OCI-LY7 (cell line): ENCODE measurements at regions of chr22 and their contacts with region 1.

Region 1: DNA sequence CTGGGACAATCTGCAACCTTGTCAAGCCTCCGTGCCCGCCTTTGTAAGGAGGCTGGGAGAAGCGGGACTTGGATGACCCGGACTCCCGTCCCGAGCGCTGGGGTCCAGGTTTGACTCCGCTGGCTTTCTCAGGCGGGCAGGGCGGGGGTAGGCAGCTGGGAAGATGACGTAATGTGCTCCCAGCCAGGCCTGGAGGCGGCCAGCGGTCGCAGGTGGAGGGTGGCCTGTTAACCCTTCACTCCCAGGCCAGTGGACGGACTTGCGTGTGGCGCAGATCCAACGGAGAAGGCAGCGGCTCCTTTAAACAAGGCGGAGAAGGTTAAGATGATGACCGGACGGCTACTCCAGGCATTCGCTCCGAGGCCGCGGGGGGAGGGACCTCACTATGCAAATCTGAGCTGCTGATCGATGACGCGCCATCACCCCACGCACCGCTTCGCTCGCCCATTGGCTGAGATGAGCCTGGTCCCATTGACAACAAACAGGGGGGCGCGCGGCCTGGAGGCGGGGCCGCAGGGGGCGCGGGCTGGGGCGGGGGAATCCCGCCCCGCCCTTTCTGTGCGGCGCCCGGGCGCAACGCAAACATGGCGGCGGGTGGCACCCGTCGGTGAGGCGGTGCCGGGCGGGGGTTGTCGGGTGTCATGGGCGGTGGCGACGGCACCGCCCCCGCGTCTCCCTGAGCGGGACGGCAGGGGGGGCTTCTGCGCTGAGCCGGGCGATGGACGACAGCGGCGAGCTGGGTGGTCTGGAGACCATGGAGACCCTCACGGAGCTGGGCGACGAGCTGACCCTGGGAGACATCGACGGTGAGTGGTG is at the start of gene SREBF2:
- DNase-seq: peak; percentile 100
- H3K4me3 ChIP-seq: peak within 1 kb of the TSS; percentile 90
- H3K27ac ChIP-seq: peak within 1 kb of the TSS; percentile 84
- H3K4me1 ChIP-seq: peaks cover 57% of the 10 kb centered on the region
- CTCF ChIP-seq: no peak
- total RNA-seq, gene SREBF2: 132 and 167 TPM in 2 replicates

Region 2: DNA sequence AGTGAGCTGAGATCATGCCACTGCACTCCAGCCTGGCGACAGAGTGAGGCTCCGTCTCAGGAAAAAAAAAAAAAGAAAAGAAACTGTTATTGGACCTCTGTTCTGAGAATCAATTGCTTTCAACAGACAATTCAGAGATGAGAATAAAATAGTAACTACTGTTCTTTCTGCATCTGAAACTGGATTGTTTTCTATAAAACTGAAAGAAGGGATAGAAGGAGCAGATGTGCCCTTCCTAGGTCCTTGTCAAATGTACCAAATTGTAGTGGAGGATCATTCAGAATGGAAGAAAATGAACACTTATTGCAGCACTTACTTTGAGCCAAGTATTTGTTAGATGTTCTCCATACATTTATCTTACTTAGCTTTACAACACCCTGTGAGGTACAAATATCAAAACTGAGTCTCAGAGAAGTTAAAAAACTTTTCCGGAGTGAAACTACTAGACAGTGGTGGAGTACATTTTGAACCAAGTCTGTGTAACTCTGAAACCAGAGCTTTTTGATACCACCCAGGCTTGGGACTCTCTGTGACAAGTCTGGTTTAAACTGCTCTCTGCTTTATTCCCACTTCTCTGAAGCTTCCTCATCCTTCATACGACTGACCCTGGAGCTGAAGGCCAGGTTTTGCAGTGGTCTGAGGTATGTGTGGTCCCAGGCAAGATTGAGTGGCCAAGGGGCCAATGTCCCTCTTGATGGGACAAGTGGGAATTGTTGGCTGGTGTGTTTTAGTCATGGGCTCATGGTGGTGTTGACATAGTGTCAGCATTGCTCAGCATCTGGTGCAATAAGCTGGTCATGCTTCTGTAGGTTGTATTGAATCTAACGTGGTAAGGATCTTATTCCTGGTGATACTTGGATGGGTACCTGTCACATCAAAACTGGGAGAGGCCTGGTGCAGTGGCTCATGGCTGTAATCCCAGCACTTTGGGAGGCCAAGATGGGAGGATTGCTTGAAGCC is 80.5 kb before region 1 on chr22:
- CTCF ChIA-PET with region 1: no interaction called
- POLR2A ChIA-PET with region 1: no interaction called
- intact Hi-C with region 1: no loop called
- DNase-seq: peak; percentile 40
- H3K4me3 ChIP-seq: no peak overlapping the region
- H3K27ac ChIP-seq: peak overlapping the region; percentile 8
- H3K4me1 ChIP-seq: peaks cover 29% of the 10 kb centered on the region
- CTCF ChIP-seq: no peak

Region 3: DNA sequence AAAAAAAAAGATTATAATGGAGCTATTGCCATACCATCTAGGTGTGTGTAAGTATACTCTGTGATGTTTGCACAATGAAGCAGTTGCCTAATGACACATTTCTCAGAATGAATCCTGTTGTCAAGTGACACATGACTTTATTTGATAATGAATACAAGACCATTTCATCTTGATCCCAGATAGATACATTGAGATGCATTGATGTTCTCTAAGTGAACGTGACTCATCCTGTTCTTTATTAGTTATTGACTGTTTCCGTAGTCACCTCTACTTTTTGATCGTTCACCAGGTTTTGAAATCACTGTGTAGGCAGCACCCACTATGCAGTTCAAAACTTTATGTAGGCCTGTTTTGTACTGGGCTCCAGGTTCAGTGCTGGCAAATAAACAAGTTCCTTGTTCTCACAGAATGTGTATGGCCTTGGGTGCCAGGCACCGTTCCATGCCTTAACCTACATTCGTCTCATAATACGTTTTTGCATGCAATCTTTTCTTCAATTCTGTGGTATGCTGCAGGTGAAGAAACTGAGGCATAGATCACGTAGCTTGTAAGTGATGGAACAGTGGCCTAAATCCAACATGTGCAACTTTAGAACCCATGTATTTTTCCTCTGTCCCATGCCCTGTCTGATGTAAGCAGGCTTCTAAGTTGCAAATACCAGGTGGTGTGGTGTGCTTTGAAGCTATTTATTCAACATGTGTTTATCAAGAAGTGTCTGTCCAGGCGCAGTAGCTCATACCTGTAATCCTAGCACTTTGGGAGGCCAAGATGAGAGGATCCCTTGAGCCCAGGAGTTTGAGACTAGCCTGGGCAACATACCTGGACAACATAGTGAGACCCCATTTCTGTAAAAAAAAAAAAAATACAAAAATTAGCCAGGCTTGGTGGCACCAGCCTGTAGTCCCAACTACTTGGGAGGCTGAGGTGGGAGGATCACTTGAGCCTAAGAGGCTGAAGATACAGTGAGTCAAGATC is 10.5 kb after region 1 on chr22:
- CTCF ChIA-PET with region 1: no interaction called
- POLR2A ChIA-PET with region 1: interaction called, 16 read pairs
- intact Hi-C with region 1: no loop called
- DNase-seq: peak; percentile 63
- H3K4me3 ChIP-seq: peak overlapping the region; percentile 25
- H3K27ac ChIP-seq: peak overlapping the region; percentile 57
- H3K4me1 ChIP-seq: peaks cover 93% of the 10 kb centered on the region
- CTCF ChIP-seq: no peak

Region 4: GRCh38 chr22:41857155-41857859 is 24.5 kb after region 1 on chr22:
- CTCF ChIA-PET with region 1: interaction called, 3 read pairs
- POLR2A ChIA-PET with region 1: interaction called, 5 read pairs
- intact Hi-C with region 1: loop called (anchors 1 kb)
- DNase-seq: peak; percentile 81
- H3K4me3 ChIP-seq: no peak overlapping the region
- H3K27ac ChIP-seq: peak overlapping the region; percentile 98
- H3K4me1 ChIP-seq: peaks cover 82% of the 10 kb centered on the region
- CTCF ChIP-seq: peak; percentile 94

Region 5: GRCh38 chr22:41919357-41920224 is 86.8 kb after region 1 on chr22:
- CTCF ChIA-PET with region 1: no interaction called
- POLR2A ChIA-PET with region 1: no interaction called
- intact Hi-C with region 1: loop called (anchors 5 kb)
- DNase-seq: peak; percentile 84
- H3K4me3 ChIP-seq: peak overlapping the region; percentile 59
- H3K27ac ChIP-seq: peak overlapping the region; percentile 88
- H3K4me1 ChIP-seq: peaks cover 81% of the 10 kb centered on the region
- CTCF ChIP-seq: 0 out of 2 replicates have a peak, but pooled peaks have one; percentile 15

Region 6: DNA sequence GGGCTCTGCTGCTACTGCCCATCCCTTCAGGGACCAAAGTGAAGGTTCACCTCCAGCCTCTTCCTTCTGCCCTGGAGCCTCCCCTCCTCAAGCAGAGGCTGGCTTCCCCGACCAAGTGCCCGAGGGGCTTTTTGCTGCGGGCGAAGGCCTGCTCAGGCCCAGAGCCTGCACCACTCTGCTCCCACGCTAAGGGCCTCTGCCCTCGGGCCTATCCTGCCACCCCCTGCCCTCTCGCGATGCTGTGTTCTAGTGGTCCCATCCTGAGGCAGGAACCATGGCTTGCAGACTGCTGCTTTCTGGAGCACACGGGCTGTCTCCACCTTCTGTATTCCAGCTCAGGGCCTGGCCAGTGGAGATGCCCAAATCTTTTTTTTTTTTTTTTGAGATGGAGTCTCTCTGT is 102.7 kb after region 1 on chr22:
- CTCF ChIA-PET with region 1: no interaction called
- POLR2A ChIA-PET with region 1: no interaction called
- intact Hi-C with region 1: loop called (anchors 2 kb)
- DNase-seq: no peak
- H3K4me3 ChIP-seq: peak overlapping the region; percentile 8
- H3K27ac ChIP-seq: peak overlapping the region; percentile 91
- H3K4me1 ChIP-seq: peaks cover 99% of the 10 kb centered on the region
- CTCF ChIP-seq: no peak

Region 7: DNA sequence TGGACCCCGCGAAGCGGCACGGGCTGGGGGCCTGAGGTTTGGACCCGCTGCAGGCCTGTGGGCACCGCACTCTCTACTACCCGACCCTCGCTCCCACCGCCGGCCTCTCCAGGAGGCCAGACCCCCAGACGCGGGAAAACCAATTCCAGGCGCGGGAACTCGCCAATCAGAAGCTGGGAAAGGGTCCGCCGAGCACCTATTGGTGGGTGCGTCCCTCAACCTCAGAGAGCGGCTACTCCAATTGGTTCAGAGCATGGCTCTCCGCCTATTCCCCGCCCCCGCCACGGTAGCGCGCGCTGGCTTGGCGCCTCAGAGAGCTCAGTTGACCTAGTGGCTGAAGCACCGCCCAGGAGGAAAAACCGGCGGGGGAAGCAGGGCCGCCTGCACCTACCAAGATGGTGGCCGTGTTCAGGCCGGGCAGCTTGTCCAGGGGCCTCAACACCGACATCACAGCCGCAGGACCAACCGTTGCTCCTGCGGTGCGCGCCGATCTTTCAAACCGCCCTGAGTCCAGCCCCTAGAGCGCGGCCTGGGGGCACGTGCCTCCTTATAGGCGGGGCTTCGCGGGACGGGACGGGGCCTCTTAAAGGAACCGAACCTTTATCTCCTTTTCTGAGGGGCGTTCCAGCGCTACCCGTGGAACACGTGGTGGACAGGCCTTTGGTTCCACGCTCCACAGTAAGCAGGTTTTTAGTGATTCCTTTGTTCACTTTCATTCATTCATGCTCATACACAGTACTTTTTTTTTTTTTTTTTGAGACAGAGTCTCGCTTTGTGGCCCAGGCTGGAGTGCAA is 114.1 kb after region 1 on chr22 and contains the start of gene CENPM:
- CTCF ChIA-PET with region 1: no interaction called
- POLR2A ChIA-PET with region 1: interaction called, 3 read pairs
- intact Hi-C with region 1: loop called (anchors 2 kb)
- DNase-seq: peak; percentile 95
- H3K4me3 ChIP-seq: peak within 1 kb of the TSS; percentile 94
- H3K27ac ChIP-seq: peak within 1 kb of the TSS; percentile 75
- H3K4me1 ChIP-seq: peaks cover 74% of the 10 kb centered on the region
- CTCF ChIP-seq: no peak
- total RNA-seq, gene CENPM: 347 and 354 TPM in 2 replicates